ENCODE measurements at regions of chr11 and their contacts with region 1.

Region 1: GRCh38 chr11:62591448-62592145 is at the start of gene TUT1:
- DNase-seq: peak; percentile 98
- H3K4me3 ChIP-seq: peak within 1 kb of the TSS; percentile 51
- H3K4me3 Mint-ChIP-seq: peak within 1 kb of the TSS; percentile 88
- H3K27ac Mint-ChIP-seq: peak within 1 kb of the TSS; percentile 95
- H3K4me1 ChIP-seq: peaks cover 36% of the 10 kb centered on the region
- H3K4me1 Mint-ChIP-seq: peaks cover 18% of the 10 kb centered on the region
- H3K27me3 ChIP-seq: no peaks in the 10 kb centered on the region
- H3K27me3 Mint-ChIP-seq: no peaks in the 10 kb centered on the region
- CTCF ChIP-seq: no peak
- total RNA-seq, gene TUT1: 27.2 and 30.2 TPM in 2 replicates

Region 2: DNA sequence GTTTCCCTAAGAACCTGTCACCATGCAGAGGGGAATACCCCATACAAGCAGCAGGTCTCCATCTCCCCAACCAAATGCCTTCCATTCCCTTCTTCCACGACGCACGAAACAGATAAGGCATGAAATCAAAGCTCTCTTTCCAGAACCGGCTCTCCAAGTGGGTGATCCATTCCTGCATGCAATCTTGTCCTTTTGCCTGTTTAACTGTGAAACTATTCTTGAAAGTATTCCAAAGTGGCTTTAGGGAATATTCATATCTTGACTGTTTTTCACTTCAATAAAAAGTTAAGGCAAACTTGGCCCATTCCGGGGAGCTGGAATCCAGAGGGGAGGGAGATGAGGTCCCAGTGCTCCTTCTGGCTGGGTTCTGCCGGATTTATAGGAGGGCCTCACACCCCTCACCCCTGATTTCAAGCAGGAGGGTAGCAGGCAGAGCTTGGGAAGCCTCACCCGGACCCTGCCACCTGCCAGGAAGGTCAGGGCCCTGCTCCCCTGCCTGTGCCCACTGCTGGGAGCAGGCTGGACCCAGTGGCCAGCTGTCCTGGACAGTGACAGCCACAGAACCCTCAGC is 111.9 kb before region 1 on chr11:
- CTCF ChIA-PET with region 1: no interaction called
- POLR2A ChIA-PET with region 1: interaction called, 11 read pairs
- intact Hi-C with region 1: no loop called
- DNase-seq: no peak
- H3K4me3 ChIP-seq: no peak overlapping the region
- H3K4me3 Mint-ChIP-seq: peak overlapping the region; percentile 43
- H3K27ac Mint-ChIP-seq: peak overlapping the region; percentile 92
- H3K4me1 ChIP-seq: peaks cover 62% of the 10 kb centered on the region
- H3K4me1 Mint-ChIP-seq: peaks cover 40% of the 10 kb centered on the region
- H3K27me3 ChIP-seq: no peaks in the 10 kb centered on the region
- H3K27me3 Mint-ChIP-seq: no peaks in the 10 kb centered on the region
- CTCF ChIP-seq: no peak

Region 3: DNA sequence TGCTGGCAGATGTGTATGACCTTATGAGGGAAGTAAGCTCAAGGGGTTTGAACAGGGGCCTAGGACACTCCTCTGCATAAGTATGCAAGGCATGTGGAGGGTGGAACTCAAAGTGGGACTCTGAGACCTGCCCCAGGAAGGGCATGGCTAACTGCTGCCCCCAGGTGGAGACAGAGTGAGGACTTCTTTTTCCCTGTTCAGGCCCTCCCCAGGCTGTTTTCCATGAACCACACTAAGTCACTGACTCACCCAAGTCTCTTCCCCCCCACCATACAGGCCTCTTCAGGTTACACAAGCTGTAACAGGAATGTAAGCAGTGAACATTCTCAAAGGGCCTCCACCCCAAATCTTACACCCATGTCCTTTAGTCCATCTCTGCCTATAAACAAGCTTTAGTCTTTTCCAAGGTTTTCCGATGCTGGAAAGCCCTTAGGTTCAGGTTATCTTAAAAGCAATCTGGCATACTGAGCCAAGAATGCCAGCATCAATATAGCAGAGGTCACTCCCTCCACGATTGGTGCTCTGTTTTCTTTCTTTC is 31.0 kb before region 1 on chr11:
- CTCF ChIA-PET with region 1: interaction called, 20 read pairs
- POLR2A ChIA-PET with region 1: interaction called, 12 read pairs
- intact Hi-C with region 1: no loop called
- DNase-seq: peak; percentile 97 to 98
- H3K4me3 ChIP-seq: no peak overlapping the region
- H3K4me3 Mint-ChIP-seq: peak overlapping the region; percentile 50
- H3K27ac Mint-ChIP-seq: peak overlapping the region; percentile 71
- H3K4me1 ChIP-seq: peaks cover 74% of the 10 kb centered on the region
- H3K4me1 Mint-ChIP-seq: peaks cover 59% of the 10 kb centered on the region
- H3K27me3 ChIP-seq: no peaks in the 10 kb centered on the region
- H3K27me3 Mint-ChIP-seq: no peaks in the 10 kb centered on the region
- CTCF ChIP-seq: peak; percentile 91 to 94

Region 4: DNA sequence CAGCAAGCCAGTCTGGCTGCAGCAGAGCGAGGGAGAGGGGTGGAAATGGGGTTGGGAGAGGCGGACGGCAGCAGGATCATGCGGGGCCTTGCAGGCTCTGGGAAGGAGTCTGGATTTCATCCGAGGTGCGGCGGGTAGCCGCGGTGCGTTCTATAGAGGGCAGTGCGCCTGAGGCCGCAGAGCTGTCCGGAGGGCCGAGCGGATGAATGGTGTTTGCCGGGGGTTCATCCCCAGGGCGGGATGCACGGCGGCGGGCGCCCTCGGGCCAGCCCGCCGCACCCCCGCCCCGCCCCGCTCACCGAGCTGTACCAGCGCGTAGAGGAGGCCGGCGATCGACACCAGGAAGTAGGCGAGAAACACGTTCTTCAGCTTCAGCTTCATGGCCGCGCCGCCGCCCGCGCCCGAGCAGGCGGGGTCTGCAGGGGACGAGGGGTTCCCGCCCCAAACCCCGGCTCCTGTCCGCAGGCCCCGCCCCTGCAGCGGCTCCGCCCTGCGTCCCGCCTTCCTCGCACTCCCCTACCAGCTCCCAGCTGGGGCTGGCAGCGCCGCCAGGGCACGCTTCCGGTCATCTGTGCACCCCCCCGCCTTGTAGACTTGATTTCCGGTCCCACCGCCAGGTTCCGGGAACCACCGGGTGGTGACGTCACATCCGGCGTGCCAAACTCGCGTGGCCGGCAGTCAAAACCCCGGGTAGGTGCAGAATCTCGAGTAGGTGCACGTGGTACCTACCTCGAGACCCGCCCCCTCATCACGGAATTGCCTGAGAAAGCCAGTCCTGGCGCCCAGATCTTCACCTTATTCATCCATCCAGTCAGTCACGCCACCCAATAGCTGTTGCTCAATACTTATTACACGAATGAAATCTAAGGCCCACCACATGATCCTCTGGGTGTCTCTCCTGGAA is 30.2 kb after region 1 on chr11 and contains the start of gene B3GAT3:
- CTCF ChIA-PET with region 1: interaction called, 19 read pairs
- POLR2A ChIA-PET with region 1: interaction called, 39 read pairs
- intact Hi-C with region 1: loop called (anchors 1 kb)
- DNase-seq: peak; percentile 100
- H3K4me3 ChIP-seq: peak within 1 kb of the TSS; percentile 81
- H3K4me3 Mint-ChIP-seq: peak within 1 kb of the TSS; percentile 91
- H3K27ac Mint-ChIP-seq: peak within 1 kb of the TSS; percentile 81
- H3K4me1 ChIP-seq: peaks cover 13% of the 10 kb centered on the region
- H3K4me1 Mint-ChIP-seq: peaks cover 7% of the 10 kb centered on the region
- H3K27me3 ChIP-seq: no peaks in the 10 kb centered on the region
- H3K27me3 Mint-ChIP-seq: no peaks in the 10 kb centered on the region
- CTCF ChIP-seq: no peak
- total RNA-seq, gene B3GAT3: 37.2 and 37.6 TPM in 2 replicates

Region 5: DNA sequence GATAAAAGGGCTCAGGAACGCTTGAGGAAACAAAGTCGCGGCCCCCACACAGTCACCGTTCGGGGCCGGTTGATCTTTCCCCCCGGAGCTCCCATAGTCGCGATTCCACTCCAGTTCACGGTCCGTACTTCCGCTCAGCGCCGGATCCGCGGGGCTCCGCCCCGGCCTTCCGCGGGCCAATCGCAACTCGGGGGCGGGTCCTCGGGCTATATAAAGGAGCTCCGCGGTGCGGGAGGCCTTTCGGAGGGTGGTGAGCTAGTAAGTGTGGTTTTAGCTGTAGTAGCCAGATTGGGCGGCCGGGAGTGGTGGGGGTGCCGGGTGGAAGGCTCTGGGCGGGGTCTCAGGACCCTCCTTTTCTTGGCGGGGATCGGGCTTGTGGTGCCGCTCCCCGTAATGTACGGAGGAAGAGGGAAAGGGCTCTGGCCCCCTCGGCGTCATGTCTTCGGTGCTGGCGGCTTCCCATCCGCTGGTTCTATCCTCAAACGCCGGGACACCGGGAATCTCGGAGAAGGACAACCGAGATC is 73.5 kb after region 1 on chr11 and contains the starts of genes C11orf98 and CSKMT:
- CTCF ChIA-PET with region 1: interaction called, 7 read pairs
- POLR2A ChIA-PET with region 1: interaction called, 46 read pairs
- intact Hi-C with region 1: no loop called
- DNase-seq: peak; percentile 95 to 99
- H3K4me3 ChIP-seq: peak within 1 kb of the TSS; percentile 50
- H3K4me3 Mint-ChIP-seq: peak within 1 kb of the TSS; percentile 99
- H3K27ac Mint-ChIP-seq: peak within 1 kb of the TSS; percentile 97
- H3K4me1 ChIP-seq: peaks cover 15% of the 10 kb centered on the region
- H3K4me1 Mint-ChIP-seq: peaks cover 5% of the 10 kb centered on the region
- H3K27me3 ChIP-seq: no peaks in the 10 kb centered on the region
- H3K27me3 Mint-ChIP-seq: no peaks in the 10 kb centered on the region
- CTCF ChIP-seq: no peak
- total RNA-seq, gene C11orf98: 115 and 123 TPM in 2 replicates
- total RNA-seq, gene CSKMT: 38.2 and 40.1 TPM in 2 replicates

Region 6: DNA sequence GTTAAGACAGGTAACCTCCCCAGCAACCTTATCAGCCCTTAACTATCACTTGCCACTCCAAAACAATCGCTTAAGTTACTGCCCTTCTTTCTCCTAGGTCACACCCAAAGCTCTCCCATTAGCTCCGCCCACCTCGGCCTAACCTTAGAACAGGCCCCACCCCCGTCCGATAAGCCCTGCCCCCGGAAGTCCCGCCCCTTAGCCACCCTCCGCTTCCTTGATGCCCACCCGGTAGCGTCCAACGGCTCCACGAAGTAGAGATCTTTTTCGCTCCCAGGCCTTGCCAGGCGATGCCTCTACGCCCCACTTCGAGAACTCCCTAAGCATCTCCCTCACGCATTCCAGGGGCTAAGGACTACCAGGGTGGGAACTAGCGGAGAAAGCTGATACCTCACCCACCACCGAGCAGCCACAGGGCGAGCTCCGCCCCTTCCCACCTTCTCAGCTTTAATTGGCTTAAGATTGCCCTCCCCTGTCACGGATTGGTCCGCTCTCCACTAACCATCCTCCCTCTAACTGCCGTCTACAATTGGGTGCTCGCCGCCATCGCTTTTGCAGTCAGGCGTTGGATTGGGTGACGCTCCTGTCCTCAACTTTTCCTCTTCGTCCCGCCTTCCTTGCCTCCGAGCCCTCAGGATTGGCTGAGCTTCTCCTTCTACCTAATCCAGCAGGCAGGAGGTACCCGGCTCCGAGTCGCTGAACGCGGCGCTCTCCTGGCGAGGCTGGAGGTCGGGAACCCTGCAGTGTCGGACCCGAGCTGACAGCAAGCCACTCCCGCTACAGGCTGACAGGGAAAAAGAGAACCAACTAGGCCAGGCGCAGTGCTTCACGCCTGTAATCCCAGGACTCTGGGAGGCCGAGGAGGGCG is 162.4 kb after region 1 on chr11 and contains the start of gene ZBTB3:
- CTCF ChIA-PET with region 1: no interaction called
- POLR2A ChIA-PET with region 1: interaction called, 17 read pairs
- intact Hi-C with region 1: no loop called
- DNase-seq: peak; percentile 98 to 99
- H3K4me3 ChIP-seq: peak within 1 kb of the TSS; percentile 56
- H3K4me3 Mint-ChIP-seq: peak within 1 kb of the TSS; percentile 97
- H3K27ac Mint-ChIP-seq: peak within 1 kb of the TSS; percentile 95
- H3K4me1 ChIP-seq: peaks cover 9% of the 10 kb centered on the region; the same call in 1 of the 2 replicates
- H3K4me1 Mint-ChIP-seq: no peaks in the 10 kb centered on the region
- H3K27me3 ChIP-seq: no peaks in the 10 kb centered on the region
- H3K27me3 Mint-ChIP-seq: no peaks in the 10 kb centered on the region
- CTCF ChIP-seq: no peak
- total RNA-seq, gene ZBTB3: 8.2 and 10.9 TPM in 2 replicates

Measured in Caco-2 (cell line).